Posterior vena cava (tissue), 2 donors: ENCODE measurements at regions of chr1 and their contacts with region 1.

Region 1: DNA sequence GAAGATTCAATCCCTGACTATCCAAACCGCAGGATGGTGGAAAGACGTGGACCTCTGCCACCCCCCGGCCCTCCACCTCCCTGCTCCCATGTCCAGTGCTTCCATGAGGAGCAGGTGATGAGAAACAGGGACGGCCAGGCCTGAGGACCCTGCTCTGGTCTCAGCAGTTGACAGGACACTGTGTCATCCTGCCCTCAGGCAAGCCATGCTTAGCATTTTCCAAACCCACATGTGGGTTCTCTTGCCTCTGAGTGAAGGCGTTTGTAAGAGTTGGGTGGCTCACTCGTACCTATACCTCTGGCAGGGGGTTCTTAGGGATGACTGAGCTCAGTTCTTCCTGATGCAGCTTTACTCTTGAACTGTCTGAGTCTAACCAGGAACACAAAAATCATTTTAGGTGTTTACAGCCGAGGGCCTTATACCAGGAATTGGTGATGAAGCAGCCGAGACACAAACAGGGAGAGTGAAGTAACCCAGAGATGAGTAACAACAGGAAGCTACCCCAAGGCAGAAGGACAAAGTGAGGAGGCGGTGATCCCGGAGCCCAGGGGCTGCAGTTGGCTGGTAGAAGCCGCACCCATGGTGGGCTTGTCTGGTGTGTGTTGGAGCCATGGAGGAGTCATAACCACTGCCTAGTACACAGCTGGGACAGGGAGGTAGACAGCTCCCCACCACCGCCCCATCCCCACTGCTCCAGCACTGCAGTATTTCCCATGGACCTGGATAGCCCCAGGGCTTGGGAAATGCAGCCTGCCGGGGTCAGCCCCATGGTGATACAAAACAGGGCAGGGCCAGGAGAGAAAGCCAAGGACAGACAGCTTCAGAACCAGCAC is 21.4 kb downstream of the MYBPH start:
- DNase-seq: no peak

Region 2: DNA sequence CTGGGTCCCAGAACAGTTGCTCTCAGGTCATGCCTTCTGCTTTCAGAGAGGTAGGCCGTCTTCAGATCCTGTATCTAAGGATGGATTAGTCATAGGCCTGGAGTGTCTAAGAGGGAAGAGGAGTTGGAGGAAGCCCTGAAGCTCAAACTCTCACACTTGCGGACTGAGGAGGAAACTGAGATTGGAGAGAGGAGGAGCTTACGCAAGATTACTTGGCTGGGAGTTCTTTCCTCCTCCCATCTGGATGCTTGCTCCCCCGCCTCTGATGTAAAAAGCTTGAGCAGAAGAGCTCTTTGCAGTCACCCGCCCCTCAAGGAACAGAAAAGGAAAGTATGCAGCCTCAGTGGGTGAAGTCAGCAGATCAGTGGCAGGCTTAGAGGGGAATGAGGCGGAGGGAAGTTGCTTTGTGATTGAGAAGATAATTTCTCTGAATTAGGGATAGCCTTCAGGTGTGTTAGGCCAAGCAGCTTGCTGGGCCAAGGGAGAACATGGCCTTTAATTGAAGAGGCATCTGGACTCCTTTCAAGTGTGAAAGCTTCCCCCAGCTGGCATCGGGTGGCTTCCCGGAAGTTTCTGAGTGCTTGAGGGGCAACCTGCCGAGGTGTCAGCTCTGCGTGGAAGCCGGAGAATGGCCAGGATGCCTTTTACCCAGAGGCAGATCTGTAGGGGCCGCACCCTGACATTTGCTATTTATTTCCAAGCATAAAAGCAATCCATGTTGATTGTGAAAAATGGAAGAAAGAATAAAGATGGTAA is 20.1 kb before region 1 on chr1:
- intact Hi-C with region 1: loop called in 1 of 2 experiments (anchors 1 kb)
- DNase-seq: no peak

Region 3: GRCh38 chr1:203172128-203173010 is 18.2 kb after region 1 on chr1:
- intact Hi-C with region 1: no loop called
- DNase-seq: peak; percentile 79

Region 4: GRCh38 chr1:203185061-203185461 is 30.9 kb after region 1 on chr1:
- intact Hi-C with region 1: loop called in 1 of 2 experiments (anchors 2 kb)
- DNase-seq: no peak

Region 5: DNA sequence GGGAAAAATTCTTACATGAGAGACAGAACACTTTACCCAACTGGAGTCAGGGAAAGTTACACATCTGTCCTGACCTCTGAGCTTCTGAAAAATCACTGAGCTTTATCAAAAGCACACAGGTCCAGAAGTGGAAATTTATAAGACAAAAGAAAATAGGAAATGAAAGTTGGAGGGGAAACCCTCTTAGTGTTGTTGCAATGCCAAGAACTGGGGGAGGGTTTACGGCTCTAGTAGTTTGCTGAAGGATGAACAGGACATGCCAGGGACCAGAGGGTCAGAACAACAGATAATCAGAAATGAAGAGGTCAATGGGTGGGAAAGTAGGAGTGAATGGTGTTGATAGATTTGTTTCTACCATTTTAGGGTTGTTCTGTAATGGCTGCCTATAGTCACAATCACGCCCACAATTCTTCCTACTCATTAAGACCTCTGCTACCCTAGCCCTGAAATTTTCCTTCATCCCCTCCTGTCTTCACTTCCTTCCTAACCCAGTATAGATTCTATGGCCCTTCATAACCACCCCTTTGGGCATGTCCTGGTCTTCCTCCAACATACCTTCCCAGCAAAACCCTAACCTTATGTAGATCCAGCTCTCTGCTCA is 227.0 kb after region 1 on chr1:
- intact Hi-C with region 1: no loop called
- DNase-seq: no peak

Region 6: GRCh38 chr1:203486618-203487370 is 332.6 kb after region 1 on chr1:
- intact Hi-C with region 1: no loop called
- DNase-seq: no peak